CD4-positive, alpha-beta T cell (primary cell): ENCODE measurements at regions of chr7 and their contacts with region 1.

Region 1: DNA sequence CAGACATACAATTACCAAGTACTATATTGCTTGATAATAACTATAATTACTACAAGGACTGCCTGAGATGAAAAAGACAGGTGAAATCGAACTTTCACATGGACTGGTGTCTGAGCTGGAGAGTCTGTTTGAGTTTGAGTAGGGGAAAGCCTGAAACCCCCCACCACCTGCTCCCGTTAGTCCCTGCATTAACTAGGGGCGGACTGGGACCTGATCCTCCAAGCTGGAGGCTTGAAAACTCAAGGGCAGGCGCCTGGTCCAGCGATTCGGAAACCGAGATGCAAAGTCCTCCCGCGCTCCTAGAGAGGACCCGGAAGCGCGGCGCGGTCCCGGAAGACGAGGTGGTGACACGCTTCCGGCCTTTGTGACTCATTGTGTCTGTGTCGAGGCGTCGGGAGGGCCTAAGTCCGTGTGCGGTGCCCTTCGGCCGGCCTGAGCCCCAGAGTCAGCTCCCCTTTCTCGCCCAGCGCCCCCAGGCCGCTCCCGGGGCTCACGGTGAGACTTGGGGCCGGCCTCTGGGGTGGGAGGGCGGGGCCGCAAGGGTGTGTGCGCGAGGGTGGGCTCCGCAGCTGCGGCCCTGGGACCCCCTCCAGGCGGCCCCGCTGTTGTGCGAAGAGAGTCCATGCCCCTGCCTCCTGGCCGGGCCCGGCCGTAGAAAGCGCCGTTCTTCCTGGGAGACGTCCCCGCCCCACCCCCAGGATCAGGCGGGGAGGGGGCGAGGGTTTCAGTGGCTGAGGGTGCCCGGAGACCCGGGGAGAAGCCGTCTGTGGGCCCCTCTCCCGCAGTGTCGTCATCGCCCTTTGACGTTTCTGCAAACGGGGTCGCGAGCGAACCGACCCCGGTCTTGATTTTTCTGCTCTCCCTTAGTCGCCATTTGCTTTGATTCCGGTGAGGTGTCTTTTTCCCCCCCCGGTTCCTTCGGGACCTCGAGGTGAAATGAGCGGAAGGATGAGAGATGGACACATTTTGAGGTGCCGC is at the start of gene ZKSCAN1:
- DNase-seq: peak; percentile 70 to 96 (median 81)
- ATAC-seq: peak; percentile 94
- H3K4me3 ChIP-seq: peak within 1 kb of the TSS; percentile 95
- H3K4me3 Mint-ChIP-seq: peak within 1 kb of the TSS; percentile 97
- H3K27ac ChIP-seq: peak within 1 kb of the TSS; percentile 76 to 91
- H3K27ac Mint-ChIP-seq: peak within 1 kb of the TSS; percentile 94
- H3K4me1 ChIP-seq: peaks cover 31% of the 10 kb centered on the region
- H3K4me1 Mint-ChIP-seq: peaks cover 39% of the 10 kb centered on the region
- H3K27me3 ChIP-seq: no peaks in the 10 kb centered on the region
- H3K27me3 Mint-ChIP-seq: no peaks in the 10 kb centered on the region
- CTCF ChIP-seq: no peak
- total RNA-seq, gene ZKSCAN1: 42.3 to 45.0 TPM

Region 2: GRCh38 chr7:99438573-99439480 is 576.7 kb before region 1 on chr7 and contains the starts of genes CPSF4 and PTCD1:
- CTCF ChIA-PET with region 1: no interaction called
- POLR2A ChIA-PET with region 1: no interaction called
- intact Hi-C with region 1: no loop called
- DNase-seq: peak; percentile 76 to 95 (median 86)
- ATAC-seq: peak; percentile 75
- H3K4me3 ChIP-seq: peak within 1 kb of the TSS; percentile 78
- H3K4me3 Mint-ChIP-seq: peak within 1 kb of the TSS; percentile 99
- H3K27ac ChIP-seq: peak within 1 kb of the TSS; percentile 69 to 80
- H3K27ac Mint-ChIP-seq: peak within 1 kb of the TSS; percentile 83
- H3K4me1 ChIP-seq: peaks cover 30% of the 10 kb centered on the region
- H3K4me1 Mint-ChIP-seq: peaks cover 31% of the 10 kb centered on the region
- H3K27me3 ChIP-seq: no peaks in the 10 kb centered on the region
- H3K27me3 Mint-ChIP-seq: no peaks in the 10 kb centered on the region
- CTCF ChIP-seq: no peak
- total RNA-seq, gene CPSF4: 28.1 to 31.7 TPM
- total RNA-seq, gene PTCD1: 4.8 to 5.3 TPM

Region 3: GRCh38 chr7:99997545-99998137 is 17.9 kb before region 1 on chr7:
- CTCF ChIA-PET with region 1: interaction called, 5 read pairs
- POLR2A ChIA-PET with region 1: interaction called, 34 read pairs
- intact Hi-C with region 1: loop called (anchors 1 kb)
- DNase-seq: peak; percentile 49 to 89 (median 68)
- ATAC-seq: peak; percentile 91
- H3K4me3 ChIP-seq: peak overlapping the region; percentile 48
- H3K4me3 Mint-ChIP-seq: peak overlapping the region; percentile 82
- H3K27ac ChIP-seq: peak overlapping the region; percentile 42 to 66
- H3K27ac Mint-ChIP-seq: peak overlapping the region; percentile 90
- H3K4me1 ChIP-seq: peaks cover 21% of the 10 kb centered on the region
- H3K4me1 Mint-ChIP-seq: peaks cover 22% of the 10 kb centered on the region
- H3K27me3 ChIP-seq: no peaks in the 10 kb centered on the region
- H3K27me3 Mint-ChIP-seq: no peaks in the 10 kb centered on the region
- CTCF ChIP-seq: no peak

Region 4: DNA sequence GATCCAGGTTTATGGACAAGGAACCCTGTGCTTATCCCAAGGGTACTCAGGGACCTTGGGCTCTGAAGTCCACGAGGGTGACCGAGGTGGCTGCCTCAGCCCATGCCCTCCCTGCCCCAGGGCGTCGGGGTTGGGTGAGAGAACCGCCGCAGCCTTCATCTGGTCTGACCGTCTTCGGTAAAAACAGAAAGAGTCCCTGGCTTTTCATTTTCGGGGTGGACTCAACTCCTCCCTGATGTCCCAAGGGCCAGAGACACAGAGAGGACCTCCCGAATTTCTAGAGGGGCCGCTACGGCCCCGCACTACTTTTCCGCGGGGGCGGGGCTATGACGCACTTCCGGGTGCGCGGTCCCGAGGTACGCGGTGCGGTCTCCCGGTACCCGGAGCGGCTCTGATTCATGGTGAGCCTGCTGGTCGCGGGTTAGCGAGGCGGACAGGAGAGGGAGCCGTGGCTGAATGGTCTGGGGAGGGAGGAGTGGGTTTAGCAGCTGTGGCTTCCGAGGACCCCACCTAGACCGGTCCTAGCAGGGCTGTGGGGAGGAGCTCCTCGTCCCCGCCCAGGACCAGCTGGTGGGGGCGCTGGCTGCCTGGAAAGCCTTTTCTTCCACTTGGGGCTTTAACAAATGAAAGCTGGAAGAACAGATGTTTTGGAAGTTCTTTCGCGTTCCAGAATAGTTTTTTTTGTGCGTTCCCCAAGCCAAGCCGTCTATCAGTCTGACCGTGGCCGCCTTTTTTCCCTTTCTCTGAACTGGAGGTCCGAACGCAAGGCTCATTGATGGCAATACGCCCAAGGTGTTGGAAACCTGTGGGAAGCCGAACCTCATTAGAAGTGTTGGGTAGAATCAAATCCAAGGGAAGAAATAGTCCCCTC is 34.2 kb after region 1 on chr7 and contains the start of gene ZSCAN21:
- CTCF ChIA-PET with region 1: no interaction called
- POLR2A ChIA-PET with region 1: interaction called, 10 read pairs
- intact Hi-C with region 1: loop called in 1 of 2 experiments (anchors 2 kb)
- DNase-seq: peak; percentile 59 to 89 (median 74)
- ATAC-seq: peak; percentile 88
- H3K4me3 ChIP-seq: peak within 1 kb of the TSS; percentile 97
- H3K4me3 Mint-ChIP-seq: peak within 1 kb of the TSS; percentile 95
- H3K27ac ChIP-seq: peak within 1 kb of the TSS; percentile 77 to 88
- H3K27ac Mint-ChIP-seq: peak within 1 kb of the TSS; percentile 96
- H3K4me1 ChIP-seq: peaks cover 18% of the 10 kb centered on the region
- H3K4me1 Mint-ChIP-seq: peaks cover 25% of the 10 kb centered on the region
- H3K27me3 ChIP-seq: no peaks in the 10 kb centered on the region
- H3K27me3 Mint-ChIP-seq: no peaks in the 10 kb centered on the region
- CTCF ChIP-seq: peak; percentile 20
- total RNA-seq, gene ZSCAN21: 2.0 to 2.7 TPM

Region 5: DNA sequence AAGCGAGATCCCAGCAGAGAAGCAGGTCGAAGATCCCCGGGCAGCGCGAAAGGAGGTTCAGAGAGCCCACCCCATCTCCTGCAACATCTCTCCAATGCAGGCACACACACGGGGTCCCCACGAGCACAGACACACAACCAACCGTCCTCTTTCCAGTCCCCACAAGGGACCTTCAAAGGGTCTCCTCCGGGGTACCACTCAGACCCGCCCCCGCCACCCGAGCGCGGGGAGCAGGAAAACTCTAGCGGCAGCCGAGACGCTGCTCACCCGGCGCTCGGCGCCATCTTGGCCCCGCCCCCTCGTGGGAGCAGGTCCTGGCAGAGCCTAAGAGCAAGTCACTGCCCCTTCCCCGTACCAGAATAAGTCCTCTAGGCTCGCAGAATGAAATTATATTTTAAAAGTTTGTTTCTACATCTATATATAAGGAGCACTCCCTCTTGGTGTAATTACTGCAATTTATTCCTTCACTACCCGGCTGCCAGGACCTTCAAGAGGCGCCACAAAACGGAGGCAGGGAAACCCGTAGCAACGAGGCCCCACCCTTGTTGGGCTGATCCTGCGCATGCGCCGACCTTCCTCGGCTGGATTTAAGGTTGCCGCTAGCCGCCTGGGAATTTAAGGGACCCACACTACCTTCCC is 103.7 kb after region 1 on chr7 and contains the starts of genes CNPY4 and TAF6:
- CTCF ChIA-PET with region 1: no interaction called
- POLR2A ChIA-PET with region 1: interaction called, 10 read pairs
- intact Hi-C with region 1: no loop called
- DNase-seq: peak; percentile 90 to 98 (median 96)
- ATAC-seq: peak; percentile 70
- H3K4me3 ChIP-seq: peak within 1 kb of the TSS; percentile 93
- H3K4me3 Mint-ChIP-seq: peak within 1 kb of the TSS; percentile 98
- H3K27ac ChIP-seq: peak within 1 kb of the TSS; percentile 79 to 98
- H3K27ac Mint-ChIP-seq: peak within 1 kb of the TSS; percentile 97
- H3K4me1 ChIP-seq: peaks cover 31% of the 10 kb centered on the region
- H3K4me1 Mint-ChIP-seq: peaks cover 24% of the 10 kb centered on the region
- H3K27me3 ChIP-seq: no peaks in the 10 kb centered on the region
- H3K27me3 Mint-ChIP-seq: no peaks in the 10 kb centered on the region
- CTCF ChIP-seq: no peak
- total RNA-seq, gene CNPY4: 22.5 to 25.6 TPM
- total RNA-seq, gene TAF6: 34.8 to 37.4 TPM

Region 6: DNA sequence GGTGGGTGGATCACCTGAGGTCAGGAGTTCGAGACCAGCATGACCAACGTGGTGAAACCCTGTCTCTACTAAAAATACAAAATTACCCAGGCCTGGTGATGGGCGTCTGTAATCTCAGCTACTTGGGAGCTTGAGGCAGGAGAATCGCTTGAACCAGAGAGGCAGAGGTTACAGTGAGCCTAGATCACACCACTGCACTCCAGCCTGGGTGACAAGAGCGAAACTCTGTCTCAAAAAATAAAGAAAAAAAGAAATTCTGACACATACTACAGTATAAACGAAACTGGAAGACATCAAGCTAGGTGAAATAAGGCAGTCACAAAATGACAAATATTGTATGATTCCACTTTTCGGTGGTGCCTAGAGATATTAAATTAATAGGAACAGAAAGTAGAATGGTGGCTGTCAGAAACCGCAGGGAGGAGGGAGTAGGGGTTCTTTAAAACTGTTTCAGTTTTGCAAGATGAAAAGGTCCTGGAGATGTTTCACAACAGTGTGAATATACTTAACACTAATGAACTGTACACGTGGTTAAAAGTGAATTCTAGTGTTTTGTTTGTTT is 381.0 kb after region 1 on chr7:
- CTCF ChIA-PET with region 1: no interaction called
- POLR2A ChIA-PET with region 1: no interaction called
- intact Hi-C with region 1: no loop called
- DNase-seq: peak in 4 of 14 experiments; percentile 23 to 84 (median 70)
- ATAC-seq: peak; percentile 93
- H3K4me3 ChIP-seq: peak overlapping the region; percentile 19
- H3K4me3 Mint-ChIP-seq: peak overlapping the region; percentile 79
- H3K27ac ChIP-seq: no peak overlapping the region
- H3K27ac Mint-ChIP-seq: peak overlapping the region; percentile 75
- H3K4me1 ChIP-seq: peaks cover 19% of the 10 kb centered on the region
- H3K4me1 Mint-ChIP-seq: peaks cover 11% of the 10 kb centered on the region
- H3K27me3 ChIP-seq: no peaks in the 10 kb centered on the region
- H3K27me3 Mint-ChIP-seq: no peaks in the 10 kb centered on the region
- CTCF ChIP-seq: no peak

Region 7: GRCh38 chr7:100837099-100837836 is 821.7 kb after region 1 on chr7:
- CTCF ChIA-PET with region 1: no interaction called
- POLR2A ChIA-PET with region 1: no interaction called
- intact Hi-C with region 1: loop called in 1 of 2 experiments (anchors 5 kb)
- DNase-seq: peak; percentile 56 to 87 (median 76)
- ATAC-seq: peak; percentile 99
- H3K4me3 ChIP-seq: peak overlapping the region; percentile 61
- H3K4me3 Mint-ChIP-seq: peak overlapping the region; percentile 85
- H3K27ac ChIP-seq: peak overlapping the region in 1 of 2 donors; percentile 10
- H3K27ac Mint-ChIP-seq: peak overlapping the region; percentile 76
- H3K4me1 ChIP-seq: peaks cover 16% of the 10 kb centered on the region
- H3K4me1 Mint-ChIP-seq: peaks cover 10% of the 10 kb centered on the region
- H3K27me3 ChIP-seq: no peaks in the 10 kb centered on the region
- H3K27me3 Mint-ChIP-seq: no peaks in the 10 kb centered on the region
- CTCF ChIP-seq: no peak

Region 8: DNA sequence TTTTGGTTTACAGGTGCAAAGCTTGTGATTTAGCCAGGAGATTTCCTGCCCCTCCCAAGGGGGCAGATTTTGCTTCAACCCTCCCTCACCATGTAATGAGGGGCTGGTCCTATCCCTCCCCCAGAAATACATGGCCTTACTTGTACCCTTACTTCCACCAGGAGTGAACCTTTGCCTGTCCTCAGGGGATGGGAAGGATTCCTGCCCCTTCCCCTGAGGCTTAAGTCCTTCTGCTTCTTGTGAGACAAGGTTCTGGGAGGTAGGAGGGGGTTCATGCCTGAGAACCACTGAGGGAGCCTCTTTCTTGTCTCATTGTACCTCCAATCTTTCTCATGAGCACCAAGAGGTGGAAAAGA is 914.2 kb after region 1 on chr7:
- CTCF ChIA-PET with region 1: no interaction called
- POLR2A ChIA-PET with region 1: no interaction called
- intact Hi-C with region 1: no loop called
- DNase-seq: no peak
- ATAC-seq: no peak
- H3K4me3 ChIP-seq: no peak overlapping the region
- H3K4me3 Mint-ChIP-seq: no peak overlapping the region
- H3K27ac ChIP-seq: no peak overlapping the region
- H3K27ac Mint-ChIP-seq: no peak overlapping the region
- H3K4me1 ChIP-seq: no peaks in the 10 kb centered on the region
- H3K4me1 Mint-ChIP-seq: no peaks in the 10 kb centered on the region
- H3K27me3 ChIP-seq: peaks cover 8% of the 10 kb centered on the region in 2 experiments
- H3K27me3 Mint-ChIP-seq: peaks cover 22% of the 10 kb centered on the region
- CTCF ChIP-seq: no peak